IMR-90 (cell line): ENCODE measurements at regions of chr3 and their contacts with region 1.

Region 1: DNA sequence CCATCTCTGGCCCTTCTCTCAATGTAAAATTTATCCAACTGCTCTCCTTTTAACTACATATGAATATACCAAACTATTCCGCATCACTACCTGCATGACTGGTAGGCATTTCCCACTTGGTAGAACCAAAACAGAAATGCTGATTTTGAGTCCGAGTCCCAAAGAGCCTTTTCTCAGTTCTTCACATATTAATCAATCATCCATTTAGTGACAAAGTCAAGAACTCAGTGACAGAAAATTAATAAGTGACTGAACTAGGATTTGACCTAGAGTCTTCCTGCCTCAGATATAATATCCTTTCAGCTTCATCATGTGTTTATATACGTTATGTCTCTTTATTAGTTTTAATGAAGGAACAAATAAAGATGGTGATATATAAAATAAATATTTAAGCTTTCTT is 700.6 kb upstream of the GOLIM4 start:
- DNase-seq: no peak
- ATAC-seq: no peak
- H3K4me3 ChIP-seq: no peak overlapping the region
- H3K27ac ChIP-seq: no peak overlapping the region
- H3K4me1 ChIP-seq: 0 out of 2 replicates have a peak, but pooled peaks cover 2% of the 10 kb centered on the region
- H3K27me3 ChIP-seq: no peaks in the 10 kb centered on the region
- CTCF ChIP-seq: no peak
- POLR2A ChIP-seq: no peak
- RAD21 ChIP-seq: no peak

Region 2: DNA sequence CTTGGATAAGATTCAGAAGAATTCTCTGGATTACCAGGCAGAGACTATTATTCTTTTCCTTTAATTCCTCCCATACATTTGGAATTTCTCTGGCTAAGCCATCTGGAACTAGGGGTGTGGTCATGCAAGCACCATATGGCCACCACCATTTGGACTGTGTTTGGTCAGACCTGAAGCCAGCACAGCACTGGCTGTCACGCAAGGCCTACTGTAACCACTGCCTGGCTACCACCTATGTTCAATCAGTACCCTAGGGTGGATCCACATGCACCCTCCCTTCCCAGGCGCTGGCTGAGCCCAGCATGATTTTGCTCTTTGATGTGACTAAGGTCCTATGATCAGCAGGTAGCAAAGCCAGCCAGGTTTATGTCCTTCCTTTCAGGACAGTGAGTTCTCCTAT is 412.8 kb before region 1 on chr3:
- CTCF ChIA-PET with region 1: no interaction called
- POLR2A ChIA-PET with region 1: interaction called, 21 read pairs
- dilution Hi-C with region 1: no loop called
- in situ Hi-C with region 1: no loop called
- intact Hi-C with region 1: no loop called
- DNase-seq: no peak
- ATAC-seq: no peak
- H3K4me3 ChIP-seq: no peak overlapping the region
- H3K27ac ChIP-seq: no peak overlapping the region
- H3K4me1 ChIP-seq: no peaks in the 10 kb centered on the region
- H3K27me3 ChIP-seq: no peaks in the 10 kb centered on the region
- CTCF ChIP-seq: no peak
- POLR2A ChIP-seq: no peak
- RAD21 ChIP-seq: no peak

Region 3: GRCh38 chr3:168628549-168628948 is 167.8 kb before region 1 on chr3:
- CTCF ChIA-PET with region 1: no interaction called
- POLR2A ChIA-PET with region 1: no interaction called
- dilution Hi-C with region 1: no loop called
- in situ Hi-C with region 1: no loop called
- intact Hi-C with region 1: no loop called
- DNase-seq: no peak
- ATAC-seq: no peak
- H3K4me3 ChIP-seq: no peak overlapping the region
- H3K27ac ChIP-seq: no peak overlapping the region
- H3K4me1 ChIP-seq: no peaks in the 10 kb centered on the region
- H3K27me3 ChIP-seq: no peaks in the 10 kb centered on the region
- CTCF ChIP-seq: no peak
- POLR2A ChIP-seq: no peak
- RAD21 ChIP-seq: no peak